Ascending aorta (tissue), 2 donors: ENCODE measurements at regions of chr6 and their contacts with region 1.

Region 1: GRCh38 chr6:3742426-3743344 is 8.8 kb downstream of the PXDC1 start:
- DNase-seq: peak in 1 of 2 donors; percentile 91
- H3K4me3 ChIP-seq: peak overlapping the region; percentile 37 to 82
- H3K27ac ChIP-seq: peak overlapping the region; percentile 100
- H3K4me1 ChIP-seq: peaks cover 43 to 87% of the 10 kb centered on the region in 2 donors
- H3K27me3 ChIP-seq: no peaks in the 10 kb centered on the region
- CTCF ChIP-seq: peak; percentile 85 to 96 (median 94)

Region 2: GRCh38 chr6:3603340-3604130 is 139.2 kb before region 1 on chr6:
- intact Hi-C with region 1: no loop called
- DNase-seq: peak in 1 of 2 donors; percentile 9
- H3K4me3 ChIP-seq: no peak overlapping the region
- H3K27ac ChIP-seq: no peak overlapping the region
- H3K4me1 ChIP-seq: no peaks in the 10 kb centered on the region
- H3K27me3 ChIP-seq: no peaks in the 10 kb centered on the region
- CTCF ChIP-seq: no peak

Region 3: DNA sequence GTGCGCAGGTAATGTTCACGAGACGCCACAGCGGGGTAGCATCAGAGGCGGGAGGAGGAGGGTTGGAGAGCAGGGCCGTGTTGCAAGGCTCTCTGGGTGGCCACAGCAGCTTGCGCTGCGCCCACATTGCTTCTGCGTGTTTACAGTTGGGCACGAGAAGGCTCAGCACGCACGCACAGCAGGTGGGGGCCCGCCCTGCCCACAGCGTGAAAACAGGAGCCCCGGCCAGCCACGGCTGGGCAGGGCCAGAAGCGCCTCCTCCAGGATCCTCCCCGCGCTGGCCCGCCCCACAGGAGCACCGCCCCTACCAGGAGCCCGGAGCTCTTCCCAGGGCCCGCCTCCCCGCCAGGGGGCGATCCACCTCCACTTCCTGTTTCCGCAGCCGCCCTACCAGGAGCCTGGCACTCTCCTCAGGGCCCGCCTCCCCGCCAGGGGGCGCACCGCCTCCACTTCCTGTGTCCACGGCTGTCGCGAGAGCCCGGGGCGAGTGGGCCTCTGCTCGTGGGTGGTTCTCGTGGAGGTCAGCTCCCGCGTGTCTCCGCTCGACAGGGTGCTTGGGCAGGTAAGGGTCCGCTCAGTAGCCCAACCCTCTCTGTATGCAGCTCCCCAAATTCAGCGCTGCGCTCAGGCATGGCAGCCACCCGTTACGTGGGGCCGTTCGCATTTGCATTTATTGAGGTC is 106.4 kb after region 1 on chr6 and contains the start of gene FAM50B:
- intact Hi-C with region 1: loop called (anchors 1 kb)
- DNase-seq: peak; percentile 79 to 96
- H3K4me3 ChIP-seq: peak within 1 kb of the TSS; percentile 46 to 64
- H3K27ac ChIP-seq: peak within 1 kb of the TSS; percentile 70 to 74
- H3K4me1 ChIP-seq: peaks cover 0 to 36% of the 10 kb centered on the region in 2 donors
- H3K27me3 ChIP-seq: no peaks in the 10 kb centered on the region
- CTCF ChIP-seq: peak; percentile 91 to 99 (median 98)
- total RNA-seq, gene FAM50B: 8.1 TPM

Region 4: GRCh38 chr6:3887150-3887700 is 144.5 kb after region 1 on chr6:
- intact Hi-C with region 1: loop called (anchors 1 kb)
- DNase-seq: no peak
- H3K4me3 ChIP-seq: no peak overlapping the region
- H3K27ac ChIP-seq: no peak overlapping the region
- H3K4me1 ChIP-seq: peaks cover 4 to 30% of the 10 kb centered on the region in 2 donors
- H3K27me3 ChIP-seq: no peaks in the 10 kb centered on the region
- CTCF ChIP-seq: peak; percentile 24 to 48 (median 40)

Region 5: GRCh38 chr6:3905945-3906845 is 163.5 kb after region 1 on chr6:
- intact Hi-C with region 1: no loop called
- DNase-seq: peak in 1 of 2 donors; percentile 54
- H3K4me3 ChIP-seq: no peak overlapping the region
- H3K27ac ChIP-seq: peak overlapping the region; percentile 30 to 44
- H3K4me1 ChIP-seq: peaks cover 22 to 35% of the 10 kb centered on the region in 2 donors
- H3K27me3 ChIP-seq: no peaks in the 10 kb centered on the region
- CTCF ChIP-seq: no peak

Region 6: GRCh38 chr6:3929281-3929798 is 186.7 kb after region 1 on chr6:
- intact Hi-C with region 1: loop called (anchors 1 kb)
- DNase-seq: no peak
- H3K4me3 ChIP-seq: no peak overlapping the region
- H3K27ac ChIP-seq: peak overlapping the region; percentile 39 to 52
- H3K4me1 ChIP-seq: peaks cover 0 to 9% of the 10 kb centered on the region in 2 donors
- H3K27me3 ChIP-seq: no peaks in the 10 kb centered on the region
- CTCF ChIP-seq: no peak

Region 7: DNA sequence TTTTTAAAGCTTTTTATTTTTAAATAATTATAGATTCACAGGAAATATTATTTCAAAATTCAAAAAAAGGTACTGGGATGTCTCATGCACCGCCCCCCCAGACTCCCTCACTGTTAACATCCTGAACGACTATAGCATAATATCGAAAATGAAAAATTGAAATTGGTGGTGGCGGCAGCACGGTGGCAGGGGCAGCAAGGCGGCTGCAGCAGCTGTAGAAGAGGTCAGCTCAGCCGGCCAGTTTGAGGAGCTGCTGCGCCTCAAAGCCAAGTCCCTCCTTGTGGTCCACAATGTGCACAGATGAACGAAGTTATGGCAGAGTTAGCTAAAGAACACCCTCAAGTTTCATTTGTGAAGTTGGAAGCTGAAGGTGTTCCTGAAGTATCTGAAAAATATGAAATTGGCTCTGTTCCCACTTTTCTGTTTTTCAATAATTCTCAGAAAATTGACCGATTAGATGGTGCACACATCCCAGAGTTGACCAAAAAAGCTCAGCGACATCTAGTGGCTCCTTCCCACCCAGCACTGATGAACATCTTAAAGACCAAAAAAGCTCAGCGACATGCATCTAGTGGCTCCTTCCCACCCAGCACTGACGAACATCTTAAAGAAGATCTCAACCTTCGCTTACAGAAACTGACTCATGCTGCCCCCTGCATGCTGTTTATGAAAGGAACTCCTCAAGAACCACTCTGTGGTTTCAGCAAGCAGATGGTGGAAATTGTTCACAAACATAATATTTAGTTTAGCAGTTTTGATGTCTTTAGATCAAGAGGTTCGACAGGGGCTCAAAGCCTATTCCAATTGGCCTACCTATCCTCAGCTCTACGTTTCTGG is 235.4 kb after region 1 on chr6:
- intact Hi-C with region 1: loop called (anchors 5 kb)
- DNase-seq: peak in 1 of 2 donors; percentile 68
- H3K4me3 ChIP-seq: no peak overlapping the region
- H3K27ac ChIP-seq: no peak overlapping the region
- H3K4me1 ChIP-seq: no peaks in the 10 kb centered on the region
- H3K27me3 ChIP-seq: no peaks in the 10 kb centered on the region
- CTCF ChIP-seq: peak; percentile 48 to 61 (median 58)